Activated T-helper 1 cell treated with anti-CD3 and anti-CD28 coated beads, Interleukin-12 subunit alpha, Interleukin-12 subunit beta, Interleukin-2, Interleukin-4 antibody, amounts not matched to agents 30 ng/mL and 10 ng/mL and 1 ng/mL, durations not matched to agents 14 hours and 24 hours and 36 hours (primary cell): ENCODE measurements at regions of chr7 and their contacts with region 1.

Region 1: GRCh38 chr7:79854621-79855020 is 280.0 kb upstream of the GNAI1 start:
- DNase-seq: no peak
- H3K4me3 Mint-ChIP-seq: no peak overlapping the region
- H3K27ac Mint-ChIP-seq: no peak overlapping the region
- H3K4me1 Mint-ChIP-seq: no peaks in the 10 kb centered on the region
- H3K27me3 Mint-ChIP-seq: peaks cover 1% of the 10 kb centered on the region

Region 2: DNA sequence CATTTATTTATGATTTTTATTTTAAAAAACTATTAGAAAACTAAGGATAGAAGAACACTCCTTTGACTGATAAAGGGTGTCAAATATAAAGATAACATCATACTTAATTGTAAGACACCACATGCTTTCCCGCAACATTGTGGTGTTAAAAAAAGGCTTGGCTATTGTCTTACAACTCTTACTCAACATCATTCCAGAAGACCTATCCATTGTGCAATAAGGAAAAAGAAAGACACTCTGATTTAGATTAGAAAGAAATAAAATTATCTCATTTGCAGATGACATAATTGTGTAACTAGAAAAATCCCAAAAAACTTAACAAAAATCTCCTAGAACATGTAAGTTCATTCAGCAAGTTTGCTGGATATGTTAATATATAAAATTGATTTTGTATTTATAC is 16.7 kb before region 1 on chr7:
- intact Hi-C with region 1: loop called (anchors 1 kb)
- DNase-seq: no peak
- H3K4me3 Mint-ChIP-seq: no peak overlapping the region
- H3K27ac Mint-ChIP-seq: no peak overlapping the region
- H3K4me1 Mint-ChIP-seq: no peaks in the 10 kb centered on the region
- H3K27me3 Mint-ChIP-seq: no peaks in the 10 kb centered on the region